Activated CD4-positive, alpha-beta memory T cell treated with anti-CD3 and anti-CD28 coated beads for 36 hours (primary cell): ENCODE measurements at regions of chr13 and their contacts with region 1.

Region 1: DNA sequence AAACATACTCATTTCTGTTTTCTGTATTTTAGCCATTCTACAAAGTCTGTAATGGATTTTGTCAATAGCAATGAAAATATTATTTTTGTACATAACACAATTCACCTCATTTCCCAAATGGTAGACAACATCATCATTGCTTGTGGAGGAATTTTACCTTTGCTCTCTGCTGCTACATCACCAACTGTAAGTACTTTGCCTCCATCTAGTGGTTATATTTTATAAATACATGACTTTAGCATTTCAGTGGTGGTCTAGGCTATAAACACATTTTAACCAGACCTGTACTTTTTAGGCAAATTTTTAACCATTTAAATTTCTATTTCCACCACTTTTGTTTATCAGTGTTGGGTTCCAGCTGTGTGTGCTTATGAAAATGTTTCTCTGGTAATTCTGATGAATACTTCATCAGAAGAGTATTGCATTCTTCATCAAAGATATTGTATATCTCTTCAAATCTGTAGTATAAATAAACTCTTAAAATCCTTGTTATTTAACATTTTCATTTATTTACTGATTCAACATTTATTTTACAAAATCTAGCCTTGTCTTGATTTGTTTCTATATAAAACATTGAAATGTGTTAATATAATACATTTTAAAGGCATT is 222.4 kb downstream of the NBEA start:
- DNase-seq: no peak
- H3K4me3 Mint-ChIP-seq: no peak overlapping the region
- H3K27ac Mint-ChIP-seq: no peak overlapping the region
- H3K4me1 Mint-ChIP-seq: peaks cover 4% of the 10 kb centered on the region
- H3K27me3 Mint-ChIP-seq: no peaks in the 10 kb centered on the region

Region 2: DNA sequence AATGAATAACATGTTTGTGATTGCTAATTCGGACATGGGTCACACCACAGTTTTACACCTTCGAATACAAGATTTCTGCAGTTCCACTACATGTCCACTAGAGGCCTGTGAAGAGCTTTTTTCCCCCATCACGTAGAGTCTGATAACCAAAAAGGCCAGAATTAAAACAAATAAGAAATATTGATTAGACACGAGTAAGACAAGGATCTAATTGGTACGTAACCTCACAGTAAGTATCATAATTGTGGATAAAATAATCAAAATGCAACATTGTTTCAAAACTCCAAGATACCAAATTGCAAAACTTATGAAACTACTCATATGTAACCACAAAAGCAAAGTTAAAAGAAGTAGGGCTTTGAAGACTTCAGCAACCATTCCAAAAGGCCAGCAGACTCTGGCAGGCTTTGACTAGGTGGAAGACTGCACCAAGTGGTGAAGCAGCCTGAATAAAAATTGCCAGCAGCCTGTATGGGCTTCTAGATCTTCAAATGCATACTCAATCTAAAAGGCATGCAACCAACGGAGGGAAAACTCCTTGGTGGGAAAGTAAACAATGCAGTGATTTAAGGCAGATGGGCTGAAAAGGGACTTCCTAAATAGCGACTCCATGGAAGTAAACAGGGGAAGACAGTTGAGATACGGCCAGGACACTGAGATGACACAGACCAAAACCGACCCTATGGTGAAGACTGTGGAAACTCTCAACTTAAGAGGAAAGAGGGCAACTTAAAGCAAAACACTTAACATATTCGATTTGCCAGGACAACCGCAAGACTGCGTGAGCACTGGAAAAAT is 1935.6 kb before region 1 on chr13:
- CTCF ChIA-PET with region 1: no interaction called
- POLR2A ChIA-PET with region 1: no interaction called
- intact Hi-C with region 1: loop called (anchors 5 kb)
- DNase-seq: no peak
- H3K4me3 Mint-ChIP-seq: no peak overlapping the region
- H3K27ac Mint-ChIP-seq: no peak overlapping the region
- H3K4me1 Mint-ChIP-seq: peaks cover 10% of the 10 kb centered on the region
- H3K27me3 Mint-ChIP-seq: peaks cover 5% of the 10 kb centered on the region

Region 3: GRCh38 chr13:33799950-33800592 is 1364.4 kb before region 1 on chr13:
- CTCF ChIA-PET with region 1: no interaction called
- POLR2A ChIA-PET with region 1: no interaction called
- intact Hi-C with region 1: loop called (anchors 5 kb)
- DNase-seq: no peak
- H3K4me3 Mint-ChIP-seq: no peak overlapping the region
- H3K27ac Mint-ChIP-seq: no peak overlapping the region
- H3K4me1 Mint-ChIP-seq: no peaks in the 10 kb centered on the region
- H3K27me3 Mint-ChIP-seq: peaks cover 2% of the 10 kb centered on the region

Region 4: GRCh38 chr13:34627939-34628592 is 536.4 kb before region 1 on chr13:
- CTCF ChIA-PET with region 1: no interaction called
- POLR2A ChIA-PET with region 1: no interaction called
- intact Hi-C with region 1: no loop called
- DNase-seq: no peak
- H3K4me3 Mint-ChIP-seq: no peak overlapping the region
- H3K27ac Mint-ChIP-seq: no peak overlapping the region
- H3K4me1 Mint-ChIP-seq: no peaks in the 10 kb centered on the region
- H3K27me3 Mint-ChIP-seq: no peaks in the 10 kb centered on the region